ENCODE measurements at regions of chr6 and their contacts with region 1.

Region 1: DNA sequence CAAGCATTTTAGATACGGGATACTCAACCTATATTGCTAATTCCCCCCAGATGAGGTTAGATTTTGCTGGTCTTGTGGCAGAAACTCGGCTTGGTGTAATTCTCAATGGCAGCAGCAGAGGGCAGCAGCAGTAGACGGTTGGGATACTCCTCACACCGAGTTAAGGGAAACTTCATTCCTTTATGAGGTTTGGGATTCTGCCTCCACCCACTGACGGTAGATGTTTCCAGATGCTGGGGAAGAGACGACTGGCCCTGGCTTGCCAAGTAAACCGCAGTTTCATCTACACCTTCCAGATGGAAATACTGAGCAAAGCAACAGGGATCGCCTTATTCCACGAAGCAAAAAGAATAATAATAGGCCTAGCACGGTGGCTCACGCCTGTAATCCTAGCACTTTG is 8.2 kb upstream of the TBC1D7 start:
- DNase-seq: peak; percentile 90
- H3K4me3 ChIP-seq: no peak overlapping the region
- H3K27ac ChIP-seq: no peak overlapping the region
- H3K4me1 ChIP-seq: no peaks in the 10 kb centered on the region
- H3K27me3 ChIP-seq: no peaks in the 10 kb centered on the region
- CTCF ChIP-seq: peak; percentile 79

Region 2: DNA sequence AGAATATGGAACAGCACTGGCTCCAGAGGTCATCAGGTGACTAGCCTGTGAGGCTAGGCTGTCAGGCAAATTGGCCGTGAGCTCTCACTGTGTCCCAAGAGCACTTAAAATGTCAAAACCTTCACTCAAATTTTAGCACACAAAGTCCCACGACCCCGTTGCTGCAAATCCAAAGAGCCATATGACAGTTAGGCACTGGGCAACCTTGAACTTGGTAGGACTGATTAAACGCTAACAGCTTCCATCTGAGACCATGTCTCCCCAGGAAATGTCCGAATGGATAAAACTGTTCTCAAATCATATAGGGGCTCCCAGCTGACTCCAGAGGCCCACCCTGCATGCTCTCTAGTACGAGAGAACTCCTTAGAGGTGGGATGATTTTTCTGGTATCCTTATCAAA is 423.4 kb before region 1 on chr6:
- intact Hi-C with region 1: loop called (anchors 2 kb)
- DNase-seq: no peak
- H3K4me3 ChIP-seq: no peak overlapping the region
- H3K27ac ChIP-seq: no peak overlapping the region
- H3K4me1 ChIP-seq: no peaks in the 10 kb centered on the region
- H3K27me3 ChIP-seq: no peaks in the 10 kb centered on the region
- CTCF ChIP-seq: no peak

Region 3: DNA sequence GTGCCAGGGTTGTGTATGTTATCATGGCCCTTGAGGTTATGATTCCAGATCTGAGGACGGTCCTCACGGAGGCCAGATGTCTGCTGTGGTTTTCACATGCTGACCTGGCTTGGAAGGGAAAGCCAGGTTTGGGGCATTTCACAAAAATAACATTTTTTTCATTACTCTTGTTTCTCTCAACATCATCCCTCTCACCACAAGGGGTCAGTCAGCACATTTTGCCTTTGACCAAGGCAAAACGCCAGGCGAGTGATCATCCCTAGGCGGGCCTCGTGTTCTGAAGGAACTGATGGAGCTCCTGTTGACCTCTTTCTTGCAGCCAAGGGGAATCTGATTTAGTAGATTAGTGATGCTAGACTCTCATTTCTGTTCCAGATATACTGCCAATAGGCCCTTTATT is 141.7 kb before region 1 on chr6:
- intact Hi-C with region 1: loop called (anchors 5 kb)
- DNase-seq: peak; percentile 32
- H3K4me3 ChIP-seq: no peak overlapping the region
- H3K27ac ChIP-seq: no peak overlapping the region
- H3K4me1 ChIP-seq: no peaks in the 10 kb centered on the region
- H3K27me3 ChIP-seq: no peaks in the 10 kb centered on the region
- CTCF ChIP-seq: peak; percentile 18

Region 4: GRCh38 chr6:13538084-13538483 is 201.5 kb after region 1 on chr6:
- intact Hi-C with region 1: loop called (anchors 2 kb)
- DNase-seq: no peak
- H3K4me3 ChIP-seq: no peak overlapping the region
- H3K27ac ChIP-seq: no peak overlapping the region
- H3K4me1 ChIP-seq: no peaks in the 10 kb centered on the region
- H3K27me3 ChIP-seq: no peaks in the 10 kb centered on the region
- CTCF ChIP-seq: peak; percentile 29

Region 5: DNA sequence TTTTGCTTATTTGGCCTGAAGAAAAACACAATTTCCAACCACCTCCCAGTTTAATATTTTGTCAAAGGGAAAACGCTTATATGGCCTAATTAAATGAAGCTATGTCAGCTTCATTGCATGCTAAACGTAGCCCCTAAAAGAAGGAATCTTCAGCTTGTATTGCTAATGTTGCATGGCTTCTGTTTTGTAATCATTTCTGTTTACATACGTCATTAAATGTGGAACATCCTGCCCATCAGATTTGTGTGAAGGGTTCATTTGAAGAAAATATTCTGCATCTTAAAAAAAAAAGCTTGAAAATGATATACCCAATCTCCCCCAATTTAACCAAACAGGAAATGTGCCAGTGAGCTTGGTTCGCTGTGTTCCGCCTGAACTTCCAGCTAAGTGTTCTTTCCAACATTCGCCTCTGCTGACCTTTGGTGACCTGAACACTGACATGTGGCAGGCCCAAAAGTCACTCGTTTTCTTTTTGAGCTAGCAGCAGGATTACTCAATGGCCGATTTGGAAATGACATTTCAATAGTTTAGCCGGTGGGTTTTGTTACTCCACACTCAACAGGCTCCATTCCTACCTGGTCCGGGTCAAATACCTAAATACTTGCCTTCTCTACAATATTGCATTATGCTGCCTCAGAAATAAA is 225.2 kb after region 1 on chr6:
- intact Hi-C with region 1: no loop called
- DNase-seq: no peak
- H3K4me3 ChIP-seq: no peak overlapping the region
- H3K27ac ChIP-seq: no peak overlapping the region
- H3K4me1 ChIP-seq: no peaks in the 10 kb centered on the region
- H3K27me3 ChIP-seq: no peaks in the 10 kb centered on the region
- CTCF ChIP-seq: no peak

Region 6: GRCh38 chr6:13574149-13574570 is 237.6 kb after region 1 on chr6:
- intact Hi-C with region 1: loop called (anchors 2 kb)
- DNase-seq: peak; percentile 94
- H3K4me3 ChIP-seq: peak overlapping the region; percentile 89
- H3K27ac ChIP-seq: peak overlapping the region; percentile 99
- H3K4me1 ChIP-seq: no peaks in the 10 kb centered on the region
- H3K27me3 ChIP-seq: no peaks in the 10 kb centered on the region
- CTCF ChIP-seq: peak; percentile 37

Region 7: GRCh38 chr6:14066782-14067406 is 730.3 kb after region 1 on chr6:
- intact Hi-C with region 1: loop called (anchors 10 kb)
- DNase-seq: no peak
- H3K4me3 ChIP-seq: no peak overlapping the region
- H3K27ac ChIP-seq: no peak overlapping the region
- H3K4me1 ChIP-seq: no peaks in the 10 kb centered on the region
- H3K27me3 ChIP-seq: no peaks in the 10 kb centered on the region
- CTCF ChIP-seq: peak; percentile 52

Measured in colonic mucosa (tissue), 4 donors.